Heart right ventricle (tissue), 16 donors: ENCODE measurements at regions of chr9 and their contacts with region 1.

Region 1: DNA sequence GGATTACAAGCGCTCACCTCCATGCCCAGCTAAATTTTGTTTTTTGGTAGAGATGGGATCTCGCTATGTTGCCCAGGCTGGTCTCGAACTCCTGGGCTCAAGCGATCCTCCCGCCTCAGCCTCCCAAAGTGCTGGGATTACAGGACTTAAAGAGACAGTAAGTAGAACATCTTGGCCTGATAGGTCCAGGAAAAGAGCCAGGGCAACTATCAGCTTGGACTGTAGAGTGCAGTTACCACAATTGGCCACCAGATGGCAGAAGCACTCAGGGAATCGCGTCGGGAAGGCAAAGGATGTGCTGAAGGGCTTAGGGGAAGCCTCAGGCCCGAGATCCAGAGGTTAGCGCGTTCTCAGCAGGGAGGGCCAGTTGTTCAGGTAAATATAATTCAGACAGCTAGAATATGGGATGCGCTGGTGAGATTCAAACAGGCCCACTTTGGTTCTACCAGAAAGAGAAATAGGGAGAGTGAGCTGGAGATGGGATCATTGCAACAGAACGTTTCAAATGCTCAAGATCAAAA is 21.5 kb downstream of the C9orf57 start:
- DNase-seq: peak; percentile 60 to 76
- ATAC-seq: peak; percentile 62 to 90 (median 84)
- H3K4me3 ChIP-seq: no peak overlapping the region
- H3K27ac ChIP-seq: no peak overlapping the region
- H3K4me1 ChIP-seq: peaks cover 0 to 11% (median 0%) of the 10 kb centered on the region in 9 donors
- H3K27me3 ChIP-seq: no peaks in the 10 kb centered on the region
- CTCF ChIP-seq: peak; percentile 95 to 99 (median 97)

Region 2: DNA sequence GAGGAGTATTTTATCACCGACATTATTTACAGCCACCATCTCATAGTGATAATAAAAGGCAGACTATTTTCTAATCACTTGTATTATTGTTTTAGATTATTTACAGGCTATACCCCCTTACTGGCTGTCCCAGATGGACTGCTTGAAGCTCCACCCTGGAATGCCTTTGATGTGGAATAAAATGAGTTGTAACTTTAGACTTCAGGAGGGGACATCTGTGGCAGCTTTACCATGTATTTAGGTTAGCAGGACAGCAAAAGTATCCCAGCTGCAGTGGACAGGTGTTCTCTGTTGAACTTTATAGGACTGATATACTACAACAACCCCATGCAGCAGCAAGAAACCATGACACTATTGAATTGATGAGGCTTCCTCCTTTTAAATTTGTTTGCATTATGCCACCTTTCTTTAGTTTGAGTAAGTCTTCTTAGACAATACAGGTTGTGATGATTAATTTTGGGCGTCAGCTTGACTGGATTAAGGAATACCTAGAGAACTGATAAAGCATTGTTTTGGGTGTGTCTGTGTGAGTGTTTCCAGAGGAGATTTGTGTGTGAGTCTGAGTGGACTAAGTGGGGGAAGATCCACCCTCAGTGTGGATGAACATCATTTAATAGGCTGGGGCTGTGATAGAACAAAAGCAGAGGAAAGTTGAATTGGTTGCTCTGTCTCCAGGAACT is 50.6 kb after region 1 on chr9:
- intact Hi-C with region 1: no loop called
- DNase-seq: no peak
- ATAC-seq: no peak
- H3K4me3 ChIP-seq: no peak overlapping the region
- H3K27ac ChIP-seq: no peak overlapping the region
- H3K4me1 ChIP-seq: no peaks in the 10 kb centered on the region
- H3K27me3 ChIP-seq: no peaks in the 10 kb centered on the region
- CTCF ChIP-seq: no peak

Region 3: GRCh38 chr9:72271613-72272478 is 232.9 kb after region 1 on chr9:
- intact Hi-C with region 1: loop called (anchors 1 to 2 kb)
- DNase-seq: peak in 1 of 2 donors; percentile 55
- ATAC-seq: peak in 1 of 8 donors; percentile 67
- H3K4me3 ChIP-seq: no peak overlapping the region
- H3K27ac ChIP-seq: no peak overlapping the region
- H3K4me1 ChIP-seq: no peaks in the 10 kb centered on the region
- H3K27me3 ChIP-seq: peaks cover 0 to 2% (median 0%) of the 10 kb centered on the region in 7 donors
- CTCF ChIP-seq: peak; percentile 66 to 95 (median 89)

Region 4: DNA sequence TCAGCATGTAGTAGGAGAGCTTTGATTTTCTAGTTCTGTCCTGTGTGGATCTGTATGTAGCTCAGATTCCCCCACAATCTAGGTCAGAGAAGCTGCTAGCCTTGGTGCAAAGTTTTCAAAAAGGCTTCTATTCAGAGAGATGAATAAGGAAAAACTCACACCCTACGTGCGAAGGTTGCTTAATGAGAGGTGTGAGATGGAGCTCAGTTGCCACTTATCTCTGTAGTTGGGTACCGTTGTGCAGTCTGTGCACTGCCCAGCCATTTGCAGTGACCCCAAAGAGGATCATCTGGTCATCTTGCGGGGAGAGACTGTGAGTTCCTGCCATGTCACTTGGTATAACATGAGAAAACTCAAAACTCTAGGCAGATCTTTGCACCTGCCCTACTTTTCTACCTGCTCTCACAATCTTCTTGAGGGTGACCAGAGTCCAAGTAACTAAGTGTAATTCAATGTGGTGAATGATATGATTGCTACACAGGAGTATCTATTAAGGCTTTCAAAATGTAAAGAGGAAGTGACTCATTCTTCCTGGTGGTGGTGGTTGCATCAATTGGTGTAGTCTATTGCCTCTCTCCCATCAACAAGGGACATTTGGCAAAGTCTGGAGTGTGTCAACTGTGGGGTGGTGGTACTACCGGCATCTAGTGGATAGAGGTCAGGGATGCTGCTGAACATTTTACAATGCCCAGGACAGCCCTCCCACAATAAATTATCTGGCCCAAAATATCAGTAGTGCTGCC is 547.6 kb after region 1 on chr9:
- intact Hi-C with region 1: loop called in 4 of 10 experiments (anchors 10 kb)
- DNase-seq: no peak
- ATAC-seq: peak in 5 of 8 donors; percentile 39 to 86 (median 49)
- H3K4me3 ChIP-seq: no peak overlapping the region
- H3K27ac ChIP-seq: peak overlapping the region in 1 of 10 donors; percentile 17
- H3K4me1 ChIP-seq: peaks cover 0 to 63% (median 5%) of the 10 kb centered on the region in 9 donors
- H3K27me3 ChIP-seq: no peaks in the 10 kb centered on the region
- CTCF ChIP-seq: no peak

Region 5: GRCh38 chr9:72812559-72813111 is 773.7 kb after region 1 on chr9:
- intact Hi-C with region 1: loop called in 1 of 10 experiments (anchors 10 kb)
- DNase-seq: no peak
- ATAC-seq: peak in 4 of 8 donors; percentile 11 to 52 (median 26)
- H3K4me3 ChIP-seq: no peak overlapping the region
- H3K27ac ChIP-seq: no peak overlapping the region
- H3K4me1 ChIP-seq: no peaks in the 10 kb centered on the region
- H3K27me3 ChIP-seq: no peaks in the 10 kb centered on the region
- CTCF ChIP-seq: no peak

Region 6: DNA sequence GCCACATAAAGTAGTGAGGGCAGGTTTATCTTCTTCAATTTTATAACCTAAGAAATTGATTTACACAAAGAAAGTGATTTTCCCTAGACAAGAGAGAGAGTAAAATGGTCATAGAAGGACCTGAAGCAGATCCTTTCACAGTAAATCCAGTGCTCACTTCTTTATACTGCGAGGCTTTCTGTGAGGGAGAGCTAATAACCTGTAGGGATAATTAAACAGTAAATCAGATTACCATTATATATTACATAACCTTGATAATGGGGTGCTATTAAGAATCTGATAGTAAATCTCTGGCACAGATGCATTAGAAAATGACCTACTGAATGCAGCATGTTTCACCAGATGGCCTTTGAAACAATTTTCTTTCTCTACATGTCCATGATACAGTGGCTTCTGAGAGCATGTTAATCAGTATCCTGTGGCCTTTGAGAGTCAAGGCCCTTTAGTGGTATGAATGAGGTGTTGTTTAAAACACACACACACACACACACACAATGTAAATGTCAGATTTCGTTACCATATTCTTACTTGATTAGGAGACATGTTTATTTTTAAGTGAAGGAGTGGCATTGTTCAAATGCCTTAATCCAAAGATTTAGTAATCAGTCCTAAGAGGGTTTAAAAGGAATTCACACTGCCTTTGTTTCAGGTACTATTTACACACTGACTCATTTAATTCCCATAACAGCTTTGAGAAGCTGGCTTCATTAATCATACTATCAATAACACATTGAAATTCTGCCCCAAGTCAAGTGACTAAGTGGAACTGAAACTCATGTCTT is 789.2 kb after region 1 on chr9:
- intact Hi-C with region 1: loop called in 8 of 10 experiments (anchors 2 to 10 kb)
- DNase-seq: no peak
- ATAC-seq: peak in 1 of 8 donors; percentile 25
- H3K4me3 ChIP-seq: no peak overlapping the region
- H3K27ac ChIP-seq: peak overlapping the region in 6 of 10 donors; percentile 8 to 70 (median 46)
- H3K4me1 ChIP-seq: peaks cover 0 to 17% (median 0%) of the 10 kb centered on the region in 9 donors
- H3K27me3 ChIP-seq: no peaks in the 10 kb centered on the region
- CTCF ChIP-seq: no peak